ENCODE measurements at regions of chr12 and their contacts with region 1.

Region 1: GRCh38 chr12:49188914-49189367 is at the start of gene TUBA1A:
- DNase-seq: peak; percentile 96
- H3K4me3 ChIP-seq: peak within 1 kb of the TSS; percentile 89
- CTCF ChIP-seq: no peak

Region 2: DNA sequence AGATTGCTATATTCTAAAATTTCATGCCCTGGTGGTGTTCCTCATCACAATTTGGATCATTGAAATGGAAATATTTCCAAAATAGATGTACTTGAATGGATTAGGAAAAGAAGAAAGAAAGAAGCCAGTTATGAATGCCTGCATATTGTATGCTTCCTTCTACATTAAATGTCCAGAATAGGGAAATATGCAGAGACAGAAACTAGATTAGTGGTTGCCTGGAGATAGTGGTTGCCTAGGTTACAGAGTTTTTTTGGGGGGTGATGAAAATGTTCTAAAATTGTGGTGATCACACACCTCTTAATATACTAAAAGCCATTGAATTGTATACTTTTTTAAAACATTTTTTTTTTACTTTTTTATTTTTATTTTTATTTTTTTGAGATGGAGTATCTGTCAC is 18.0 kb before region 1 on chr12:
- CTCF ChIA-PET with region 1: interaction called, 4 read pairs
- POLR2A ChIA-PET with region 1: interaction called, 11 read pairs
- DNase-seq: no peak
- H3K4me3 ChIP-seq: no peak overlapping the region
- CTCF ChIP-seq: no peak

Region 3: DNA sequence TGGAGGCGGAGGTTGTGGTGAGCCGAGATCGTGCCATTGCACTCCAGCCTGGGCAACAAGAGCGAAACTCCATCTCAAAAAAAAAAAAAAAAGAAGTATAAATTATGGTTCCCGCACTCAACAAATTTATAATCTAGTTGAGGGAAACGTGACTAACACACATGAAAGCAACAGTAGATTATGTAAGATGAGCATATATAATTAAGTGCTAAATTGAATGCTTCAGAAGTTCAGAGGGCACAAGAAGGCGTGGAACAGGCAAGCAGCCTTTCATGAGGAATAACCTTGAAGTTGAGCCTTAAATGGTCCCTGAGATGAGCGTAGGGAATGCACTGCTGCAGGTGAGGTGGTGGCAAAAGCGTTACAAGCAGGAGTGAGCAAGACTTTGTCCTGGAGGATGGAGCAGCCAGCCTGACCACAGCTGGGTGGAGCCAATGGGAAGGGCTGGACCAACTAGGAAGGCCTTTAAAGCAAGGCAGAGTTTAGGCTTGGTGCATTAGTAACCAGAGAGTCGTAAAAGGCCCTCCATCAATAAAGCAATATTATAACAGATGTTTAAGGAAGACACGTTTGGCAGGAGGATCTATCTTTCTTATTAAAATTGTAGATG is 30.6 kb after region 1 on chr12:
- CTCF ChIA-PET with region 1: interaction called, 7 read pairs
- POLR2A ChIA-PET with region 1: interaction called, 18 read pairs
- DNase-seq: no peak
- H3K4me3 ChIP-seq: no peak overlapping the region
- CTCF ChIP-seq: no peak

Region 4: DNA sequence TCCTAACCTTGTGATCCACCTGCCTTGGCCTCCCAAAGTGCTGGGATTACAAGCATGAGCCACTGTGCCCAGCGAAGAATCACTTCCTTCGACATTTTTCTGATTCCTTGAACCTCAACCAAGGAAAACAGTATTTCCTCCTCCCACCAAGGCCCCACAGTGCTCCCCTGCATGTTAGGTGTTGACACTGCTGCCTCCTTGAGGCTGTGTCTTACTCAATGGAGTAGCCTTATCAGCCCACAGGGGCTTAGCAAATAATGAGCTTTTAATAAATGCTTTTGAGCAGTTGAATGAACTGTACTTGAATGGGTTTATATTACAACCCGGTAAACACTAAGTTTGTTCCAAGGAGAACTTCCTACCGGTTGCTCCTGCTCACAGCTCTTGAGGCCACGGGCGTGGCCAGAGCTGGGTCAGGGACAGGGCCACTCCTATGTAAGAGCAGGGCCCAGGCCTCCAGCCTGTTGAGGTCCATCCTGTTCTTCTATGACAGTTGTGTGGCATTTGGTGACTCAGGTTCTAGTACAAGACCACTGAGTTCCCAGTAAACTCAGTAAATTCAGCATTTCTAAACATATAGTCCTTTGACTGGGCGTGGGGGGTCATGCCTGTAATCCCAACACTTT is 36.7 kb after region 1 on chr12:
- CTCF ChIA-PET with region 1: interaction called, 7 read pairs
- POLR2A ChIA-PET with region 1: interaction called, 18 read pairs
- DNase-seq: no peak
- H3K4me3 ChIP-seq: no peak overlapping the region
- CTCF ChIP-seq: no peak

Region 5: GRCh38 chr12:49232940-49233841 is 44.2 kb after region 1 on chr12:
- CTCF ChIA-PET with region 1: interaction called, 24 read pairs
- POLR2A ChIA-PET with region 1: interaction called, 28 read pairs
- DNase-seq: no peak
- H3K4me3 ChIP-seq: peak overlapping the region; percentile 1
- CTCF ChIP-seq: peak; percentile 16

Region 6: GRCh38 chr12:49264738-49265515 is 76.0 kb after region 1 on chr12 and contains the start of gene TUBA1C:
- CTCF ChIA-PET with region 1: interaction called, 4 read pairs
- POLR2A ChIA-PET with region 1: interaction called, 21 read pairs
- DNase-seq: no peak
- H3K4me3 ChIP-seq: peak within 1 kb of the TSS; percentile 94
- CTCF ChIP-seq: no peak

Region 7: GRCh38 chr12:49288412-49288853 is 99.5 kb after region 1 on chr12:
- CTCF ChIA-PET with region 1: no interaction called
- POLR2A ChIA-PET with region 1: no interaction called
- DNase-seq: no peak
- H3K4me3 ChIP-seq: no peak overlapping the region
- CTCF ChIP-seq: peak; percentile 68

Measured in AG04449 (cell line).